ENCODE measurements at regions of chr13 and their contacts with region 1.

Region 1: DNA sequence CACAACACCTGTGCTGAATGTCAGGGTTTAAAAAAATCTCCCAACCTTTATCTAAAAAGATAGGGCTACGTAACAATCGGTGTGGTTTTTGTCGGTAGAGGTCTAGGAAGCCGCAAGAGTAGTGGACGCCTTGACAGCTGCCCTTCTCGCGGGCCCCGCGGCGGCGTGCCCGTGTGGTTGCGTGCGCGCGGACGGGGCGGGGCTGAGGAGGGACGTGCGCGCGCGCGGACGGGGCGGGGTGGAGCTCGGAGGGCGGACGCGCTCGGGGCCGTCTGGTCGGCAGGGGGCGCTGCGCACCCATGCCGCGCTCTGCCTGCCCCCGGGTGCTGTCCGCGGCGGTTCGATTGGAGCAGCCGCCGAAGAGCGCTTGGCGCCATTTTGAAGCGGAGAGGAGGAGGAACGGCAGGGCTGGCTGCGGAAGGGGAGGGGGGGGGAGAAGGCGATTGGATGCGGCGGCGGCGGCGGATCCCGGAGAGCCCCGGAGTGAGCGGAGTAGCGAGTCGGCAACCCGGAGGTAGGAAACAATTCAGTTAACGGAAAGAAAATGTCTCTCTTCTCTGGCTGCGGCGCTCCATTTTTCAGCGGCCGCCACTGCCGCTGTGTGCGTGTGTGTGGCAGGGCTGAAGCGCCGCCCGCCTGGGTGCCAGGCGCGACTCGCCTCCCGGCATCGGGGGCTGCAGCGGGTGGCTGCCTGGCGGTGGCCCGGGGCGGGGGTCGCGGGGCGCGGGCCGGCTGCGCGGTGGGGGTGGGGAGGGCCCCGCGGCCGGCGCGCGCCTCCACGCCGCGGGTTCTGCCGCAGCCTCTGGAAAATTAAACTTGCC is at the start of gene PDS5B:
- DNase-seq: peak; percentile 92
- ATAC-seq: peak; percentile 91
- H3K4me3 ChIP-seq: peak within 1 kb of the TSS; percentile 65
- H3K27ac ChIP-seq: peak within 1 kb of the TSS; percentile 86
- H3K4me1 ChIP-seq: peaks cover 6% of the 10 kb centered on the region
- H3K27me3 ChIP-seq: no peaks in the 10 kb centered on the region
- CTCF ChIP-seq: peak; percentile 97
- POLR2A ChIP-seq: no peak
- RAD21 ChIP-seq: peak; percentile 90
- total RNA-seq, gene PDS5B: 20.1 and 26.7 TPM in 2 replicates

Region 2: GRCh38 chr13:31742097-31742734 is 844.1 kb before region 1 on chr13:
- CTCF ChIA-PET with region 1: no interaction called
- POLR2A ChIA-PET with region 1: no interaction called
- dilution Hi-C with region 1: no loop called
- in situ Hi-C with region 1: no loop called
- intact Hi-C with region 1: no loop called
- DNase-seq: peak; percentile 69
- ATAC-seq: peak; percentile 96
- H3K4me3 ChIP-seq: peak overlapping the region; percentile 25; the same call in 1 of the 2 replicates
- H3K27ac ChIP-seq: no peak overlapping the region
- H3K4me1 ChIP-seq: no peaks in the 10 kb centered on the region
- H3K27me3 ChIP-seq: no peaks in the 10 kb centered on the region
- CTCF ChIP-seq: peak; percentile 96
- POLR2A ChIP-seq: no peak
- RAD21 ChIP-seq: peak; percentile 91

Region 3: DNA sequence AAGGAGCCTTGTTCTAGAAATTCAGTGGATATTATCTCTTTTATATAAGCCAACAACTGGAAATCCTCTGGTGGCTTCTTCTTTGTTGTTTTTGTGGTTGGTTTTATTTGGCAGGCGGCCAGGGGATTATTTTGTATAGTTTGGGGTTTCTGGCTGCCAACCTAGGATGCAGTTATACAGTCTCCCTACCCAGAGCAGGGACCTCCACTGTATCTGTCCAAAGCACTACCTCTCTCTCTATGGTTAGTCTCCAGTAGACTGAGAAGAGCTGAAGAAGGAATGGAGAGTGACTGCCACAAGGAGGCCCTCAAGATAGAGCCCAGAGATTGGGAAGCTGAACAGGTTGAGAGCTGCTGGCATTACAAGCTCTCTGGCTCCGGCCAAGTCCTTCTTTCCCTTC is 351.4 kb before region 1 on chr13:
- CTCF ChIA-PET with region 1: no interaction called
- POLR2A ChIA-PET with region 1: no interaction called
- dilution Hi-C with region 1: no loop called
- in situ Hi-C with region 1: no loop called
- intact Hi-C with region 1: no loop called
- DNase-seq: no peak
- ATAC-seq: no peak
- H3K4me3 ChIP-seq: no peak overlapping the region
- H3K27ac ChIP-seq: no peak overlapping the region
- H3K4me1 ChIP-seq: no peaks in the 10 kb centered on the region
- H3K27me3 ChIP-seq: no peaks in the 10 kb centered on the region
- CTCF ChIP-seq: no peak
- POLR2A ChIP-seq: no peak
- RAD21 ChIP-seq: no peak

Region 4: GRCh38 chr13:32911506-32911905 is 325.2 kb after region 1 on chr13:
- CTCF ChIA-PET with region 1: interaction called, 4 read pairs
- POLR2A ChIA-PET with region 1: no interaction called
- dilution Hi-C with region 1: no loop called
- in situ Hi-C with region 1: no loop called
- intact Hi-C with region 1: loop called (anchors 1 kb)
- DNase-seq: peak; percentile 57
- ATAC-seq: peak; percentile 92
- H3K4me3 ChIP-seq: no peak overlapping the region
- H3K27ac ChIP-seq: no peak overlapping the region
- H3K4me1 ChIP-seq: no peaks in the 10 kb centered on the region
- H3K27me3 ChIP-seq: no peaks in the 10 kb centered on the region
- CTCF ChIP-seq: peak; percentile 52
- POLR2A ChIP-seq: no peak
- RAD21 ChIP-seq: peak; percentile 63

Region 5: DNA sequence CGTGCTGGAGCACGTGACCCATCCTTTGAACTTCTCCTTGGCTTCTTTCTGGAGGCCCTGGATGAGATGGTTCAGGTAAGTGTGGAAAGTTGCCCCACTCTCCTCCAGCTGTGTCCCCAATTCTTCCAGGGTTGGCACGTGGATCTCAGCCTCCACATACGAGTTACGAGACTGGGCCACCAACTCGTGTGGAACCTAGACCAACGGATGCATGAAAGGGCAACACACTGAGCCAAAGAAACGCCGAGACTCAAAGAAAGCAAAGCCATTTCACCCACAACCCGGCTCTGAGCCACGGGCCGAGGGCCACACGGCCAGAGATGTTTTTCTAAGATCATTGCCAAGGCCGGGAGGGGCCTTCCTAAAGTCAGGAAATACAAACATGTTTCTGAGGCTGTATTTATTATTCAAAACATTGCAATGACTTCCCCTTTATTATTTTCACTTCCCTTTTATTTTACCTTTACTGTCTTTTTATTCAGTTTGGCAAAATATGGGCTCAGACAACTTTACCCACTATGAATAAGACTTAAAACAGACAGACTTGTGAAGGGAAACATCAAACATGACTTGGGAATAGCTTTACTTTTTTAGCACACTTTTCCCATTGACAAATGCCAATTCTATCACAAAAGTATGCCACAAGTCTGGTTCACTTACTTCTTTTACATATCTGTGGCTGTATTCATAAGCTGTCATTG is 524.6 kb after region 1 on chr13:
- CTCF ChIA-PET with region 1: no interaction called
- POLR2A ChIA-PET with region 1: no interaction called
- dilution Hi-C with region 1: no loop called
- in situ Hi-C with region 1: no loop called
- intact Hi-C with region 1: loop called (anchors 5 kb)
- DNase-seq: peak; percentile 56
- ATAC-seq: no peak
- H3K4me3 ChIP-seq: no peak overlapping the region
- H3K27ac ChIP-seq: peak overlapping the region; percentile 59; the same call in 1 of the 2 replicates
- H3K4me1 ChIP-seq: peaks cover 55% of the 10 kb centered on the region
- H3K27me3 ChIP-seq: no peaks in the 10 kb centered on the region
- CTCF ChIP-seq: no peak
- POLR2A ChIP-seq: no peak
- RAD21 ChIP-seq: no peak

Region 6: GRCh38 chr13:33285420-33286124 is 699.3 kb after region 1 on chr13 and contains the start of gene STARD13:
- CTCF ChIA-PET with region 1: no interaction called
- POLR2A ChIA-PET with region 1: no interaction called
- dilution Hi-C with region 1: no loop called
- in situ Hi-C with region 1: no loop called
- intact Hi-C with region 1: loop called (anchors 2 kb)
- DNase-seq: peak; percentile 98
- ATAC-seq: peak; percentile 84
- H3K4me3 ChIP-seq: peak within 1 kb of the TSS; percentile 68
- H3K27ac ChIP-seq: peak within 1 kb of the TSS; percentile 97
- H3K4me1 ChIP-seq: peaks cover 17% of the 10 kb centered on the region
- H3K27me3 ChIP-seq: no peaks in the 10 kb centered on the region
- CTCF ChIP-seq: peak; percentile 64
- POLR2A ChIP-seq: peak; percentile 99
- RAD21 ChIP-seq: peak; percentile 60
- total RNA-seq, gene STARD13: 46.6 and 46.9 TPM in 2 replicates

Region 7: DNA sequence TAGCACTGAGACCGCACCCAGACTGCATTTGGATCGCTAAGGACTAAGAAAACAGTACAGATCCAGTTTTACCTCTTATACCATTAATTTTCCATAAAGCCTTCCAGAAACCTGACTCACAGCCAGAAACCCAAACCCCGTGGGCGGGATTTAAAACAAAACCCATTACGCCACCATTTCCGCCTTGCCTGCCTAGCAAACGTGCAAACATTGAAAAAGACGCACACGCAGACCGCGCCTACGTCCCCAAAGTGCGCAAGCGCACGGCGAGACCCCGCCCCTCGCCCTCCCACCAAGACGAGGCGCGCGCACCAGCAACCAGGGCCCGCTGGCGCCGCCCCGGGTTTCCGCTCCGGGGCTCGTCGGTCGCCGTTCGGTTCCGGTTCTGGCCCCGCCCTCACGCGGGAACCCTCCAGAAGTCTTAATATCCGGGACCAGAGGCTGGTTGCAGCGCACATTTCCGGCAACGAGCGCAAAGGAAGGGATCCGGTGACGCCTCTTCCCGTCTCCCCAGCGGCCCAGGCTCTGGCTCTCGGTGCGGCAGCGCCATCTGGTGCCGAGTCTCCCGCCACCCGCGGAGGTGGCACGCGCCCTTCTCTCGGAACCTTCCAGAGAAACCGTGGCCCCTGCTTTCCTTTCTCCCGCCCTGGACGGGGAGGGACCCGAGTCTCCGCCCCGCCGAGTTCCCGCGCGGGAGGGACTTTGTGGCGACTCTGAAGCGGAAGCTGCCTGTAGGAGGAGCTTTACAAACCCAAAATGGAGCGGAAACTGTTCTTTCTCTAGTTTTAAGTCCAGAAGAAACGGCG is 956.2 kb after region 1 on chr13:
- CTCF ChIA-PET with region 1: interaction called, 4 read pairs
- POLR2A ChIA-PET with region 1: interaction called, 6 read pairs
- dilution Hi-C with region 1: no loop called
- in situ Hi-C with region 1: loop called (anchors 10 kb)
- intact Hi-C with region 1: loop called (anchors 1 kb)
- DNase-seq: peak; percentile 100
- ATAC-seq: peak; percentile 94
- H3K4me3 ChIP-seq: peak overlapping the region; percentile 54
- H3K27ac ChIP-seq: peak overlapping the region; percentile 92
- H3K4me1 ChIP-seq: peaks cover 12% of the 10 kb centered on the region
- H3K27me3 ChIP-seq: no peaks in the 10 kb centered on the region
- CTCF ChIP-seq: peak; percentile 99
- POLR2A ChIP-seq: peak; percentile 89
- RAD21 ChIP-seq: peak; percentile 99